Activated CD4-positive, alpha-beta T cell treated with anti-CD3 and anti-CD28 coated beads for 36 hours (primary cell): ENCODE measurements at regions of chr13 and their contacts with region 1.

Region 1: GRCh38 chr13:99296398-99296797 is 10.8 kb downstream of the GPR183 start:
- DNase-seq: no peak
- ATAC-seq: peak; percentile 54
- H3K4me3 Mint-ChIP-seq: peak overlapping the region; percentile 58
- H3K27ac Mint-ChIP-seq: peak overlapping the region; percentile 96
- H3K4me1 Mint-ChIP-seq: peaks cover 86% of the 10 kb centered on the region
- H3K27me3 Mint-ChIP-seq: no peaks in the 10 kb centered on the region

Region 2: DNA sequence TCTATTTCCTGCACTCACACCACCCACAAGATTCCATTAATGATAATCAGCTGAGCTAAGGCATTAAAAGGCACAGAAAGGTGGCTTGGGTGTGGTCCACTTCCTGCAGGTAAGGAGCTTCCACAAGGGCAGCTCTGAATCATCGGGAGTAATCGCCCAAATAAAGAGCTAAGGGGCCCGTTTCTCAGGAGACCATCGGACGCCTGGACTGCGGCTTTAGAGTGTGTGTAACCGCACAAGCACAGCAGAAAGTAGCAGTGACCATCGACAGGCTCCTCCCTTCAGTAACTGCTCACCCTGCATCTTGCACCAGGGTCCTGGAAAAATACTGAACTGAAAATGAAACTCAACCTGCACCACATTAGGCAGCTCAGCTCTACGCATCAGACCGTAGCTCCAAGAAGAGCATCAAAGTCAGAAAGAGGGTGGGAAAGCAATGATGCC is 725.4 kb before region 1 on chr13:
- CTCF ChIA-PET with region 1: no interaction called
- POLR2A ChIA-PET with region 1: no interaction called
- intact Hi-C with region 1: loop called in 1 of 2 experiments (anchors 5 kb)
- DNase-seq: peak; percentile 65
- ATAC-seq: peak; percentile 58
- H3K4me3 Mint-ChIP-seq: peak overlapping the region; percentile 75
- H3K27ac Mint-ChIP-seq: peak overlapping the region; percentile 73
- H3K4me1 Mint-ChIP-seq: peaks cover 87% of the 10 kb centered on the region
- H3K27me3 Mint-ChIP-seq: no peaks in the 10 kb centered on the region

Region 3: DNA sequence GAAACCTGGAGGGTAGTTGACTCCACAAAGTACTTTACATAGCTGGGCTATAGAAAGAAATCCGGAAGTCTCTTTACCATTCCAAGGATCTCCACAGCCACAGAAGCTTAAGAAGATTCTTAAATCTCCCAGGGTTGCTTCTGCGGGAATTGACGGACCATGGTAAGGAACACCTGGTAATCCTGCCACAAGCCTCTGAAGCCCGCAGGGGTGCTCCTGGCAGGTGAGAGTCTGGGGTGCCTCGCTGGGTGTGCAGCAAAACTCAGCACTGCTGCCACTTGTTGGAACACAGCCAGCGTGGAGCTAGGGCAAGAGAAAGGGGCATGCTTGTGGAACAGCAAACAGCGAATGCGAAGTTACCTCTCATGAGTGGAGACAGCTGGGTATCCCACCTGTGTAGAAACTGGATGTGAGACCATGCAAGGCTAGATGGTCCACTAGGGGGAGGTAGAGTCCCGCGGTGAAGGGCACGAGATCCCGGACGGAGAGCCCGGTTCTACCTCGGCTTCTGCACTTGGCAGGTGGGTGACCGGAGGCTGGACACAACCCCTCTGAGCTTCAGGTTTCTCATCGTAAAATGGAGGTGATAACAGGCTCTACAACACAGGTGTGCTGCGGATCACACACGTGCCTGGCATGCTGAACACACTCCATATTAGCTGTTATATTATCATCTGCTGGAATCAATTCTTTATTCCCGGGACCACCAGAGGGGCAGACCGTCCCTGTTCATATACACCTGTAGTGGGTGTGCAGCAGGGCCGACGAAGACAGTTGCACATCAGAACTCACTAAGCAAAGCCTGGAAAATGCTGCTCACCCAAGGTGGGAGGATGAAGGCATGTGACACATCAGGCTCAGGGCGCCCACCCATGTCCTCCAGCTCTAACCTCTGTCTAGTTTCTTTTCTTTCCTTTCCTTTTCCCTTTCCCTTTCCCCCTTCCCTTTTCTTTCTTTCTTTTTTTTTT is 119.8 kb before region 1 on chr13:
- CTCF ChIA-PET with region 1: interaction called, 12 read pairs
- POLR2A ChIA-PET with region 1: no interaction called
- intact Hi-C with region 1: no loop called
- DNase-seq: peak; percentile 86
- ATAC-seq: peak; percentile 91
- H3K4me3 Mint-ChIP-seq: peak overlapping the region; percentile 51
- H3K27ac Mint-ChIP-seq: no peak overlapping the region
- H3K4me1 Mint-ChIP-seq: peaks cover 41% of the 10 kb centered on the region
- H3K27me3 Mint-ChIP-seq: no peaks in the 10 kb centered on the region

Region 4: DNA sequence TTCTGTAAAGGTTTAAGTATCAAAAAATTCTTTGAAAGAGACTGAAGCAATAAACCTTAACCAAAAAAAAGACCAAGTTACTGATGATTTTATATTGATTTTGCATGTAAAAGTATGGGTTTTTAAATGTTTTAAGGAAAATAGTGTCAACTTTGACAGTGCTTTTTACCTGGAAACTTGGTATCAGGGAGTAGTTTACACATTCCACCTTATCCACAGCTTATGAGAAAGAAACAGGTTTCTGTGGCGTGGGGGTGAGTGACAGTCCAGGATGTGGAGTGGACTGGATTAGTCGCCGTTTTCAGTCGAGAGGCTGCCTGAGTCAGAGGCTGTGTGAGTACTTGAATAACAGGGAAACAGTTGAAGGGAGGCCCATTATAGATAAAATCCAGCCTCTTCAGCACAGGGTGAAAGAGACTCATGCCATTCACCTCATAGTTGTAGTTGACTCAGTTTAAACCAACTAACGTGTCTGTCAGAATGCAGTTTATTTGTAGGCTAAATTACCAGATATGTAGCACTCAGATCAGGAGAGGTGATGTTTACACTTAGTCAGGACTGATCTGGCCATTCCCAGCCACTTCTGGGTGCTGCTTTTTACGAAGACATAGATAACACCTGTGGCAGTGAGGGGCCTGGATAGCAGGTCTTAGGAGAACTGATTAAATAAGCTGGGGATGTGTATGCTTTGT is 11.4 kb after region 1 on chr13:
- CTCF ChIA-PET with region 1: interaction called, 7 read pairs
- POLR2A ChIA-PET with region 1: interaction called, 16 read pairs
- intact Hi-C with region 1: loop called (anchors 1 kb)
- DNase-seq: peak; percentile 88
- ATAC-seq: peak; percentile 82
- H3K4me3 Mint-ChIP-seq: peak overlapping the region; percentile 85
- H3K27ac Mint-ChIP-seq: peak overlapping the region; percentile 98
- H3K4me1 Mint-ChIP-seq: peaks cover 73% of the 10 kb centered on the region
- H3K27me3 Mint-ChIP-seq: no peaks in the 10 kb centered on the region

Region 5: DNA sequence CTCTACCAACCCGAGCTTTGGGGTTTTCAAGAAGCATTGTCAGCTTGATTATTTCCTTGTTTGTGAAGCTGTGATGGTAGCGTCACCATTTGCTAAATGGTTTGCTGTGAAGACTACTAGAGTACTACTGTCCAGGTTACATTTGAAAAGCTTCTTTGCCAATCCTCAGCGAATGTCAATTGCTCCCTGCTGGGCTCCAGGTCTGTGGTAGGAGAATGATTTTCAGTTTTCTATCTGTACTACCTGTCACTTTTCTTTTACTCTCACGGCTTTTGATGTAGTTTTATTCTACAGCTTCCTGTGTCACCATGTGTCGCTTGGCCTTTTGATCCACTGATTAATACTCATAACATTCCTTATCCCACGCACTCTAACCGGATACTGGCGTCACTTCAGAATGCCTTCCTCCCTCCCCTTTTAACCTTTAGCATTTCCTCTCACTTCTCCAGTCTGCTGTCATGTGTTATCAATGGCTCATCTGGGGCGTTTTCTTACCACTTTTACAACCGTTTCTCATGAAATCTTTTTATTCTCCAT is 18.3 kb after region 1 on chr13:
- CTCF ChIA-PET with region 1: interaction called, 9 read pairs
- POLR2A ChIA-PET with region 1: interaction called, 19 read pairs
- intact Hi-C with region 1: no loop called
- DNase-seq: peak; percentile 85
- ATAC-seq: peak; percentile 76
- H3K4me3 Mint-ChIP-seq: peak overlapping the region; percentile 60
- H3K27ac Mint-ChIP-seq: peak overlapping the region; percentile 96
- H3K4me1 Mint-ChIP-seq: peaks cover 88% of the 10 kb centered on the region
- H3K27me3 Mint-ChIP-seq: no peaks in the 10 kb centered on the region

Region 6: GRCh38 chr13:99322297-99323103 is 26.1 kb after region 1 on chr13:
- CTCF ChIA-PET with region 1: interaction called, 7 read pairs
- POLR2A ChIA-PET with region 1: interaction called, 3 read pairs
- intact Hi-C with region 1: loop called in 1 of 2 experiments (anchors 1 kb)
- DNase-seq: peak; percentile 66
- ATAC-seq: peak; percentile 78
- H3K4me3 Mint-ChIP-seq: peak overlapping the region; percentile 26
- H3K27ac Mint-ChIP-seq: peak overlapping the region; percentile 93
- H3K4me1 Mint-ChIP-seq: peaks cover 81% of the 10 kb centered on the region
- H3K27me3 Mint-ChIP-seq: no peaks in the 10 kb centered on the region